ENCODE measurements at regions of chr1 and their contacts with region 1.

Region 1: DNA sequence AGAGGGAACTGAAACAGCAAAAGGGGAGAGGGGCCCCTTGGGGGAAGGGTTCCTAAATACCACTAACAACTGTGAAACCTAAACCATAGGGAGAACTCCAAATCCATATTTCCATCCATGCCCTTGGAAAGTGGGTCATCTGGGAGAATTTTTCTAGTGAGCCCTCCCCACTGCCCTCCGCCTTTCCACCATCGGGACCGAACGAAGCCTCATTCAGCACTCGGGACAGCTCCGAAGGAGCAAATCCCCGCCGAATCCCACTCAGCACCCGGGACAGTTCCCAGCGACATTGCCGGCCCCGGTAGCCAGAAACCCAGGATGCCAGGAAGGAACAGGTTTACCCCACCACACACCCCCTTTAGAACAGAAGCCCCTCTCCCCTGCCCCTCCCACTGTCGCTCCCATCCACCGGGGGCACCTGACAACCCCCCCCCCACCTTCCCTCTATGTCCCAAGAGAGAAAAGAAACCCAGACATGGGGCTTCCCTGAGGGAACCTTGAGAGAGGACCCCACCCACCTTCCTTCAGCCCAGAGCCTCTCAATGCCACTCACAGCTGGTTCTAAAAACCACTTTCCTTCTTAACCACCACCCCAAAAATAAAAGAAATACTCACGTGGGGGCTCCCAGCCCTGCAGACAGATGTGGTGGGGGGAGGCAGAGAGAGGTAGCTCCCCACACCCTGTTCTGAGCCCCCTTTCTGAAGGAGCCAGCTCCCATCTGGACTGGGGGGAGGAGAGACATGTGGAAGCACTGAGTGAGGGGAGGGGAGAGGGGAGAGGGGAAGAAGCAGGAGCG is 4.5 kb downstream of the DLGAP3 start:
- DNase-seq: peak; percentile 73 to 79 (median 74)
- H3K4me3 ChIP-seq: no peak overlapping the region
- H3K27ac ChIP-seq: no peak overlapping the region
- H3K4me1 ChIP-seq: peaks cover 4 to 9% of the 10 kb centered on the region in 2 donors
- H3K27me3 ChIP-seq: peaks cover 10% of the 10 kb centered on the region
- CTCF ChIP-seq: no peak
- POLR2A ChIP-seq: no peak

Region 2: GRCh38 chr1:34852677-34853217 is 72.2 kb before region 1 on chr1:
- intact Hi-C with region 1: no loop called
- DNase-seq: peak; percentile 92 to 99 (median 97)
- H3K4me3 ChIP-seq: no peak overlapping the region
- H3K27ac ChIP-seq: peak overlapping the region in 3 of 5 donors; percentile 43 to 81 (median 76)
- H3K4me1 ChIP-seq: peaks cover 23 to 29% of the 10 kb centered on the region in 2 donors
- H3K27me3 ChIP-seq: no peaks in the 10 kb centered on the region
- CTCF ChIP-seq: peak; percentile 93 to 100 (median 100)
- POLR2A ChIP-seq: no peak

Region 3: GRCh38 chr1:34976384-34977209 is 51.6 kb after region 1 on chr1:
- intact Hi-C with region 1: loop called in 1 of 2 experiments (anchors 5 kb)
- DNase-seq: peak in 1 of 7 donors; percentile 29
- H3K4me3 ChIP-seq: no peak overlapping the region
- H3K27ac ChIP-seq: peak overlapping the region in 3 of 5 donors; percentile 26 to 76 (median 49)
- H3K4me1 ChIP-seq: peaks cover 14 to 21% of the 10 kb centered on the region in 2 donors
- H3K27me3 ChIP-seq: no peaks in the 10 kb centered on the region
- CTCF ChIP-seq: no peak
- POLR2A ChIP-seq: no peak